Right ventricle myocardium inferior (tissue), 1 donor: ENCODE measurements at regions of chr3 and their contacts with region 1.

Region 1: DNA sequence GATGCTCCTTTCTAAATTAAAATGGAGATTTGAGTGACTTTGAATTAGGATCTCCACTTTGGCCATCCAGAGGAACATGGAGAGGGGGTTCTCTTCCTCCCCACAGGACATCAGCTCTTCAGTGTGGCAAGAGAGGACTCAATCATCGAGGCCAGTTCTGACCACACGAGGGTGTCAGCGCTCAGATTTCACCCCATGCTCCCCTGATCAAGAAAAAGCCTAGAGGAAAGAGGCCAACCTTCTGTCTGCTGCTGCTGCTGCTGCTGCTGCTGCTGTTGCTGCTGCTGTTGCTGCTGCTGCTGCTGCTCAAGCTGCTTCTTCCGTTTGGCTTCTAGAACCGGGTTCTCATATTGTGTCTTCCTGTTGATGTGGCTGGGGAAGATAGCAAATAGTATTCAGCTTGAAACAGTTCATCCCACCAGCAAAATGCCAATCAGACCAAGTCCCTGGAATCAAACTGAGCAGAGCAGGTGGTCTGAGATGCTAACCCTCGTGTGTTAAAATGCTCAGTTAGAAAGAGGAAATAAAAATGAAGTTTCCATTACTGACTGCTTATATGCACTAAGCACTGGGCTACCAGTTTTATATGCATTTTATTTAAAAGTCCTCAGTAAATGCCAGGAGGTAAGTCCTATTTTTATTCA is 599.0 kb downstream of the MAGI1 start:
- DNase-seq: no peak
- ATAC-seq: peak; percentile 71

Region 2: DNA sequence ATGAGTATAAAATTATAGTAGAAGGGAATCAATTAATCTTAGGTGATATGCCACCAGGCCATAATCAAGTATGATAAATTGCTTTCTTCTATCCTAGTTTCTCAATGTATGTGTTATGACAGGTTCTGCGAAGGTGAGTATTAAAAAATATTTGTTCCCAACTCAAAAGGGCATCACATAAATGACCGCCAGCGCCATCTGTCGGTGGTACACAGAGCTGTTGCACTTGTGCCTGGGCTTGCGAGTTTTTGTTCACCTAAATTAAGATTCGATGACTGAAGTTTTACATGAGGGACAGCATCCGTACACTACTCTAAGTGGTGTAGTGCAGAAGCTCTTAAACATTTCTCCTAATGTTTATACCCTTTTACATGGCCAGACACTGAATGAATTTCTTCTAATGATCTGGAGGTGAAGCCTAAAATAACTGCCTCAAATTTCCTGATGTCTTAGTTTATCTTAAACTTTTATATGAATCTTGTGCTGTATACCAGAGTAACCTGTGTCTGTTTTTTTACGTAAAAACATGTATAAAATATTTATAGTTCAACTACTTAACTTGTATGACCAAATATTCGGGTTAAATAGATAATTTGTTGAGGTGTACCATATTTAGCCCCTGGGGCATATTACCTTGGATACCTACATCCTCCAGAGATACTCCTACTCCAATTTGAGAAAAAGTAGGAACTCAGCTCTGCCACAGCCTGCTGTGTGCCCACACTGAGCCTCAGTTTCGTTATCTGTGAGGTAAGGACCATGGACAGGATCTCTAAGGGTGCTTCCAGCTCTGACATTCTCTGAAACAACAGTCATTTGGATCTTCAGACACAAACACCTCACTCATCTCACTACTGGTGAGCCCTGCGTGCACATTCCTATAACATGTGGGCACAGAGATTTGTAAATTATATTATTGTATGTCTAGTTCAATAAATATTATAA is 233.4 kb after region 1 on chr3:
- intact Hi-C with region 1: loop called (anchors 2 kb)
- DNase-seq: peak; percentile 62
- ATAC-seq: no peak